ENCODE measurements at regions of chr2 and their contacts with region 1.

Region 1: DNA sequence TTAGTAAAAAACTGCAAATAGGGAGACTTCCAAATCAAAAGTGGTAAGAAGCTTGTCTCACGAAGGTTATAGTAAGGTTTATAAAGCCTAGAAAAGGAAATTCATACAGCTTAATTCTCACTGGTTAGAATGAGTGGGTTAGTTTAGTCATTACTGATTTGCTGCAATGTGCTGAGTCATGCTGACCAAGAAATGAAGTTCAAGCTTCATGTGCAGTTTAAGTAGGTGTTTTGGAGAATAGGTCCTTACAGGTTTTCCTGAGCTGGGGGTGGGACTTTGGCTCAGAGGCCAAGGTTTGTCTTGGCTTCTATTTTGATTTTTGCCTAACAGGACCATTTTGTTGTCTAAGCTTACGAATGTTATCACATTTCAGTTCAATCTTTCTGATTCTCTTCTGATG is 15.1 kb downstream of the CLIP4 start:
- DNase-seq: peak; percentile 62 to 88
- H3K4me3 ChIP-seq: peak overlapping the region; percentile 54
- H3K27ac ChIP-seq: peak overlapping the region; percentile 97
- H3K4me1 ChIP-seq: peaks cover 59% of the 10 kb centered on the region
- H3K27me3 ChIP-seq: no peaks in the 10 kb centered on the region
- CTCF ChIP-seq: no peak

Region 2: DNA sequence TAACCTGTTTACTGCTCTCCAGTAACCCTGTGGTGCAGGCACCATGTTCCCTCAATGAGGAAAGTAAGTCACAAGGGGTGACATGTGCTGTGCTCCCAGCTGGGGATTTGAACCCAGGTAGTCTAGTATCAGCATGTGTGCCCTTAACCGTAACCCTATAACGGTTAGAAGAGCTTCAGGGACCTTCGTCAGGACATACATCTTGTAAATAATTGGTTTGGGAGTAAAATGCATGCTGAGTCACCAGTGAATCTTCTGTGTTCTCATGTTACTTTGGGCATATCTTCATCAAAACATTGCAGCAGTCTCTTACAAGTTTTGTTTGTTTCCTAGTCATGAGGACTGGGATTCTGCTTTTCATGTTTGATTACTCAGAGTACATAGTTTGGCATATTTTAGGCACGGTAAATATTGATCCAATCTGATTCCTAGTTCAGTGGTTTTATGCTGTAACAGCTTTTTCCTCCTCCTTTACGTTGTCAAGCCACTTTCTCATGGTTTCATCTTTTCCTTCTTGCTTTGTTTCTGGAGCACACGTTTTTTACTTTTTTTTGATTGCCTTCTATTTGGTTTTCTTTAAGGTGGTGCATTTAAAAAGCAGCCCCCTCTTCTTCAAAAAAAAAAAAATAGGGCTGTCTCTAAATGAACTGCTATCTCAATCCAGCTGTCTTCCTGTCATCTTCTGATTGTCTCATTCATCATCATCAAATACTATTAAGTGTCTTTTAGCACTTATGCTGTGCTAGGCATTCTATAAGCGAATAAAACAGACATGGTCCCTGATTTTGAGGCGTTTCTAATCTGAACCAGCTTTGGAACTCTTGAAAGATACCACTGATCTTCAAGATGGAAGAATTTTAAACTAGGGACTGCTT is 35.3 kb after region 1 on chr2:
- CTCF ChIA-PET with region 1: interaction called, 25 read pairs
- POLR2A ChIA-PET with region 1: no interaction called
- intact Hi-C with region 1: no loop called
- DNase-seq: peak in 1 of 2 experiments; percentile 73
- H3K4me3 ChIP-seq: no peak overlapping the region
- H3K27ac ChIP-seq: peak overlapping the region; percentile 39
- H3K4me1 ChIP-seq: peaks cover 20% of the 10 kb centered on the region
- H3K27me3 ChIP-seq: no peaks in the 10 kb centered on the region
- CTCF ChIP-seq: no peak

Region 3: GRCh38 chr2:29186817-29187216 is 56.5 kb after region 1 on chr2:
- CTCF ChIA-PET with region 1: no interaction called
- POLR2A ChIA-PET with region 1: interaction called, 11 read pairs
- intact Hi-C with region 1: no loop called
- DNase-seq: no peak
- H3K4me3 ChIP-seq: no peak overlapping the region
- H3K27ac ChIP-seq: no peak overlapping the region
- H3K4me1 ChIP-seq: no peaks in the 10 kb centered on the region
- H3K27me3 ChIP-seq: no peaks in the 10 kb centered on the region
- CTCF ChIP-seq: no peak

Measured in PC-9 (cell line).